ENCODE measurements at regions of chr15 and their contacts with region 1.

Region 1: DNA sequence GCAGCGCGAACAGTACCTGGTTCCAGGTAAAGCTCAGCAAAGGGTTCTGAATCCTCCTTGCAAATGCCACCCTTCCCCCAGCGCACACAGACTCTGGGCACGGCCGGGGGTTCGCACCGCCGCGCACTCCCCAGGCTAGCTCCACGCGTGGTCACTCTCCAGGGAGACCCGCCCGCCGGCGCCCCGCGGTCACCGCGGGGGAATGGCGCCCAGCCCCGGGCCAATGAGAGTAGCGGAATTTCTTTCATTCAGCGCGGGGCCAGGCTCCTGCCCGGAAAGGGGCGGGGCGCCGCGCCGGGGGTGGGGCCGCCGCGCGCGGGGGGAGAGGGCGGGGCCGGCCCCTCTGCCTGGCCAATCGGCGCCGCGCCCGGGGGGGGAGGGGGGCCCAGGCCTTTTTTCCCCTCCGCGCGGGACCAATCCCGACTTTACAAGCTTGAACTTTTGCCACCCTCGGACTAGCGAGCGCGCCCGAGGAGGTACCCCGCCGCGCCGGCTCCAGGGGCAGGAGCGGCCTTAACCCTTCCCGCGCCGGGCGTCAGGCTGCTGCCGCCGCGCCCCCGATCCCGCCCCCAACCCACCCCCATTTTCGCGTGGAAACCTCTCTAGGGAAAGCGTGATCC is 1.1 kb upstream of the SMAD6 start:
- DNase-seq: peak; percentile 96 to 98 (median 97)
- ATAC-seq: peak; percentile 70 to 80 (median 77)
- H3K4me3 ChIP-seq: peak overlapping the region; percentile 54 to 68 (median 54)
- H3K27ac ChIP-seq: peak overlapping the region; percentile 68 to 88 (median 82)
- H3K4me1 ChIP-seq: peaks cover 0 to 10% (median 0%) of the 10 kb centered on the region in 4 donors
- H3K27me3 ChIP-seq: no peaks in the 10 kb centered on the region
- CTCF ChIP-seq: no peak
- POLR2A ChIP-seq: peak; percentile 54

Region 2: GRCh38 chr15:66603301-66604179 is 97.4 kb before region 1 on chr15:
- intact Hi-C with region 1: loop called in 1 of 2 experiments (anchors 10 kb)
- DNase-seq: peak; percentile 74 to 80 (median 75)
- ATAC-seq: peak; percentile 90 to 95 (median 94)
- H3K4me3 ChIP-seq: no peak overlapping the region
- H3K27ac ChIP-seq: no peak overlapping the region
- H3K4me1 ChIP-seq: no peaks in the 10 kb centered on the region
- H3K27me3 ChIP-seq: no peaks in the 10 kb centered on the region
- CTCF ChIP-seq: peak; percentile 83 to 90 (median 84)
- POLR2A ChIP-seq: no peak

Region 3: DNA sequence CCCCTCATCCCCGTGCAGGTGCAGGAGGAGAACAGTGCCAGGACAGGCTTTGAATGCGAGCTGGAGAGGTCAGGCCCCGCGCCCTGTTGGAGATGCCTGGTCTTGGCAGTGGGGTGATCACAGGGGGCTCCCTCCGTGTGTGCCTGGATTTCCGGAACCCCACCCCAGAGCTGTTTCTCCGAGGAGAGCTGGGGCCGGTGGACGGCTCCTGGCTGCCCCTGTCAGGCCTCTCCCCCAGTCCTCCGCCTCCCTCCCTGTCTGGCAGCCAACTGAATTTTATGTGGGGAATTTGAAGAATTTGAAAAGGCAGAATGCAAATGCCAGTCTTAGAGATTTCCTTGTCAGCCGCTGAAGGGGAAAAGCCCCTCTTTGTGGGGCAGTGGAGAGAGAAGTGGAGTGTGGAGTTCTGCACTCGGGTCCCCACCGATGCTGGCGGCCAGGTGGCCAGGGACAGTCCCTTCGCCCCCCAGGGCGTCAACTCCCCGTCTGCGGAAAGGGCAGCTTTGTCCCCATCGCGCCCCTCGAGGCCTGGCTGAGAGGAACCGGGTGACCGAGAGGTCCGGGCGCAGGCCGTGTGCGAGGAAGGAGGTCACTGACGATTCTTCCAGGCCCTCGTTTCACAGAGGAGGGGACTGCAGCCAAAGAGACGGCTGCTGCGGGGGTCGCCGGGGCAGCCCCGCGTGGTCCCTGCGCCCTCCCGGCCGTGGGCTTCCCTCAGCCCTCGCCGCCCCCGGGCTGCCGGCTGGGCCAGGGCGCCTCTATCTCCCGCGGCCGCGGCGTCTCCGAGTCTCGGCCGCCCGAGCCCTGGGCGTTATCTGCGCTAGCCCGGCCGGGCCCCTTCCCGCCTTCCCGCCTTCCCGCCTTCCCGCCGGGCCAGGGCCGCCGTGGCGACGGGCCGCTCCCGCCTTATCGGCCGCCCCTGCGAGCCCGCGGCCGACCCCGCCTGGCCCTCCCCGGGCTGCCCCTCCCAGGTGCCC is 79.1 kb before region 1 on chr15:
- intact Hi-C with region 1: loop called in 1 of 2 experiments (anchors 10 kb)
- DNase-seq: peak in 1 of 3 donors; percentile 57
- ATAC-seq: peak in 3 of 4 donors; percentile 12 to 28 (median 18)
- H3K4me3 ChIP-seq: peak overlapping the region in 2 of 3 donors; percentile 7 to 9
- H3K27ac ChIP-seq: peak overlapping the region; percentile 55 to 74 (median 56)
- H3K4me1 ChIP-seq: peaks cover 0 to 30% (median 14%) of the 10 kb centered on the region in 4 donors
- H3K27me3 ChIP-seq: no peaks in the 10 kb centered on the region
- CTCF ChIP-seq: no peak
- POLR2A ChIP-seq: no peak

Region 4: GRCh38 chr15:66630801-66631351 is 70.0 kb before region 1 on chr15:
- intact Hi-C with region 1: loop called (anchors 10 kb)
- DNase-seq: peak in 1 of 3 donors; percentile 56
- ATAC-seq: peak; percentile 54 to 77 (median 58)
- H3K4me3 ChIP-seq: no peak overlapping the region
- H3K27ac ChIP-seq: peak overlapping the region in 1 of 3 donors; percentile 9
- H3K4me1 ChIP-seq: no peaks in the 10 kb centered on the region
- H3K27me3 ChIP-seq: no peaks in the 10 kb centered on the region
- CTCF ChIP-seq: no peak
- POLR2A ChIP-seq: no peak

Region 5: DNA sequence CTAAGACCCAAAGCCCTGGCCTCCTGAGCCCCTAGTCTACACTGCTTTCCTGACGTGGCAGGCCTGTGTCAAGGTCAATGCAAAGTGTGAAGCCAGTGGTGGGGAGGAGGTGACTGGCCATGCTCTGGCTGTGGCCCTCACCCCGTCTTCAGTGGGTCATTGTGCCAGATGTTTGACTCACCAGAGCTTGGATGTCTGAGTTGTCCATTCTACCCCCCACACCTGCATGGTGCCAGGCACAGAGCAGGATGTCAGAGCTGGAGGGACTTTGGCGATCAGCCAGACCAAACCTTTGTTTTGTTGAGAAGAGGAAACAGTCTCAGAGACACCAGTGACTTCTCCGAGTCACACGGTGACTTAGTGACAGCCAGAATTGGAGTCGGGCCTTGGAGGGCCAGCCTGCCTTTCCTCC is 50.6 kb after region 1 on chr15:
- intact Hi-C with region 1: no loop called
- DNase-seq: peak in 2 of 3 donors; percentile 38 to 60
- ATAC-seq: peak; percentile 44 to 67 (median 52)
- H3K4me3 ChIP-seq: no peak overlapping the region
- H3K27ac ChIP-seq: no peak overlapping the region
- H3K4me1 ChIP-seq: peaks cover 0 to 10% (median 4%) of the 10 kb centered on the region in 4 donors
- H3K27me3 ChIP-seq: no peaks in the 10 kb centered on the region
- CTCF ChIP-seq: no peak
- POLR2A ChIP-seq: no peak

Region 6: DNA sequence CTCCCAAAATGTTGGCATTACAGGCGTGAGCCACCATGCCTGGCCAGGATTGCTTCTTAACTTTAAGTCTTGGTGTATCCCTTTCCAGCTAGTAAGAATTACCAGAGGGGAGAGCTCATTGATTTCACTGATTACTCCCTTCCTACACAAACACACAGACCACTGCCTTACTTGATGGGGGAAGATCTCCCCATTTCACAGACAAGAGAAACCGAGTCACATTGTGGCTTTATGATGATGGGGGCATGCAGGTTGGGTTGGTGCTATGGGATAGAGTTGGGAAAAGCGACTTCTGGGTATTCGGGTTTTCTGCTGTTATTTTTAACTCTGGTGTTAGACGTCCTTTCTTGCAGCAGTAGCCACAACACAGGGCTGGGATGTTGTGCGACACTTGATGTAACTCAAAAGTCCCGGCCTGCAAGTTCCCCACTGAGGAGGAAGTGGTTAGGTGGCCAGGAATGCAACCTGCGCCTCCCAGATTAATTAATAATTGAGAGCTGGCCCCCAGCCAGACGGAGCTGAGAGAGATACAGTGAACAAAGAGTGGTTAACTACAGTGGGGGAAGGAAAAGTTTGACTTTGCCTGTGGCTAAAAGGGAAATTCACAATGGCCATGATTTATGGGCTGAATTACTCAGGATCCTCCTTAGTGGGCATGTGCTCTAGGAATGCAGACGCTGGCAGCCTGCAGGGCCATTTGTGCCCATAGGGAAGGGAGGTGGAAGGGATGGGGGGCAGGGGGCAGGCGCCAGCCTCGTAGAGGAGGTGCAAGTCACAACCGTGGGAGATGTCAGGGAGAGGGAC is 64.8 kb after region 1 on chr15:
- intact Hi-C with region 1: loop called (anchors 10 kb)
- DNase-seq: peak in 2 of 3 donors; percentile 79 to 80
- ATAC-seq: peak; percentile 45 to 70 (median 59)
- H3K4me3 ChIP-seq: no peak overlapping the region
- H3K27ac ChIP-seq: no peak overlapping the region
- H3K4me1 ChIP-seq: peaks cover 2 to 59% (median 20%) of the 10 kb centered on the region in 4 donors
- H3K27me3 ChIP-seq: no peaks in the 10 kb centered on the region
- CTCF ChIP-seq: no peak
- POLR2A ChIP-seq: no peak

Region 7: DNA sequence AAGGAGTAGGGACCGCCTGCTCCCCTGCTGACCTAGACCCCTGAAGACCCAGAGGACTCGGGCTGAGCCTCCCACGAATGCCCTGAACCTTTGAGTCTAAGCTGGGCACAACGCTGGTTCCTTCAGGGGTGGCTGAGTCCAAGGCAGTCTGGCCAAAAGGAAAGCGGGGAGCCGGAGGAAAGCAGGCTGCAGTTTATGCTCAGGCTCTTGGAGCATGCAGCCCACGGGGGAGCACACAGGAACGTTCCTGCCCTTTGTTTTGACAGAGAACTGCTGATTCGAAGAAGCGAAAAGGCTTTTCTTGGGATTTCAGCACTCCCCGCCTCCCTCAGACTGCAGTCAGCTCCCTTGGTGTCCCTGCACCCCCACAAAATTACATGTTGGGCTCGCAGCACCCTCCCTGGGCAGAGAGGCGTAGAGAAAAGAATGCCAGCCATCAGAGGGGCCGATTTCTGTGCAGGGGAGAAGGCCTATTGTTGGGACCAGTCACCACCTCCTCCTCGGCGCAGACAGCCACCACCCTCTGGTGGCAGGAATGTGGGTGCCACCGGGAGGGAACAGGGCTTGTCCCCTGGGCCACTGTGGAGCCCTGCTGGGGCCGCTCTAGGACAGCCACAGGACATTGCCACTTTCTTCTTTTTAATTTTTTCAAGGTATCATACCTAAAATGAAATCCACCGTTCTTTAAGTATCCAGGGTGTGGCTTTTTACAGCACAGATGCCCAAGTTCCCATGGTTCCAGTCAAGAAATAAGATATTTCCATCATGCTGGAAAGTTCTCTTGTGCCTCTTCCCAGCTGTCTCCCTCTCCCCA is 73.3 kb after region 1 on chr15:
- intact Hi-C with region 1: loop called (anchors 10 kb)
- DNase-seq: peak; percentile 84 to 85 (median 85)
- ATAC-seq: peak; percentile 90 to 92 (median 90)
- H3K4me3 ChIP-seq: no peak overlapping the region
- H3K27ac ChIP-seq: peak overlapping the region in 1 of 3 donors; percentile 42
- H3K4me1 ChIP-seq: peaks cover 0 to 41% (median 19%) of the 10 kb centered on the region in 4 donors
- H3K27me3 ChIP-seq: no peaks in the 10 kb centered on the region
- CTCF ChIP-seq: peak; percentile 95 to 99 (median 98)
- POLR2A ChIP-seq: no peak

Measured in right lobe of liver (tissue), 6 donors.